ENCODE measurements at regions of chr13 and their contacts with region 1.

Region 1: GRCh38 chr13:108895220-108895704 is 265.9 kb downstream of the MYO16 start:
- DNase-seq: no peak
- ATAC-seq: peak; percentile 52; the same call in 1 of the 2 replicates
- H3K4me3 ChIP-seq: no peak overlapping the region
- H3K27ac ChIP-seq: no peak overlapping the region
- H3K4me1 ChIP-seq: no peaks in the 10 kb centered on the region
- H3K27me3 ChIP-seq: no peaks in the 10 kb centered on the region
- CTCF ChIP-seq: peak; percentile 24 to 64 (median 47); a peak in 4 of 6 replicates
- POLR2A ChIP-seq: no peak
- RAD21 ChIP-seq: peak; percentile 68

Region 2: GRCh38 chr13:108227651-108228272 is 667.5 kb before region 1 on chr13:
- CTCF ChIA-PET with region 1: no interaction called
- POLR2A ChIA-PET with region 1: no interaction called
- RAD21 ChIA-PET with region 1: no interaction called
- intact Hi-C with region 1: loop called (anchors 2 kb)
- DNase-seq: peak; percentile 19
- ATAC-seq: 0 out of 2 replicates have a peak, but pooled peaks have one; percentile 32
- H3K4me3 ChIP-seq: no peak overlapping the region
- H3K27ac ChIP-seq: no peak overlapping the region
- H3K4me1 ChIP-seq: no peaks in the 10 kb centered on the region
- H3K27me3 ChIP-seq: no peaks in the 10 kb centered on the region
- CTCF ChIP-seq: peak in 2 of 3 experiments; percentile 59 to 81; a peak in 4 of 6 replicates
- POLR2A ChIP-seq: no peak
- RAD21 ChIP-seq: peak; percentile 46

Region 3: DNA sequence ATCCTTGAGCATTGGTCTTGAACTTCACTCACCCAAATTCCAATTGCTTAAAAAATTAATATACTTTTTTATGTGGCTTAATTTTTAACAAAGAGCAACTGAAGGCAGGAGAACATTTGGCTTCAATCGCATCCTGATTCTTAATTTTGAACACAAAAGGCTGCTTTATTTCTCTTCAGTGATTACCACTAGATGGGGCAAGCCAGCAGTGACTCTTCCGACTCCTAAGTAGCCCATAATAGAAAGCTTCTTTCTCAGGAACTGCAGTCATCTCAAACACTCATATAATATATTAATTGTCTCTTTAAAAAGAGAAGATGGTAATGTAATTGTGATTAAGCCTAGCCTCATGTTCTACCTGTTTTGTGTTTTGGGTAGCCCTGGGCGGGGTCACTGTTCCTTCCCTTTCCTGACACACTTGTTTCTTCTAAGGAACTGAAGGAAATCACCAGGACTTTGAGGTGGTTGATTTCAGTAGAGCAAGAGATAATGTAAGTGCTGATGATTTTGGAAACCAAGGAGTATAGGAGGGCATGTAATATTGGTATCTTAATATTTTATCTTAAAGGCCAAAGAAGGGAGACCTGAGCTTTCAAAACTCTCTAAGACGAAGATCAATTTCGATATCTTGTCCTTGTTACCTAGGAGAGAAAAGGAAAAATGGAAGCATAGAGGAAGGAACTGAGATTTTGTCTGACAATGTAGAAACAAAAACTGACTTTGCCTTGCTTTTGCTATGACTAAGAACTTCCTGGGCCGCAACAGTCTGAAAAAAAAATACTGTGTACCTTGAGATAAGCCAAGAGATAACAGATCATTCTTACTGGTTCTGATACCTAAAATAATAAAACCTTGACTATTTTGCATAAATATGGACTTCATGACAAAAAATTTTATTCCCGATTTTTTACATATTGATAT is 552.6 kb before region 1 on chr13:
- CTCF ChIA-PET with region 1: interaction called, 15 read pairs
- POLR2A ChIA-PET with region 1: no interaction called
- RAD21 ChIA-PET with region 1: no interaction called
- intact Hi-C with region 1: loop called (anchors 1 kb)
- DNase-seq: peak; percentile 16
- ATAC-seq: peak; percentile 74
- H3K4me3 ChIP-seq: no peak overlapping the region
- H3K27ac ChIP-seq: no peak overlapping the region
- H3K4me1 ChIP-seq: no peaks in the 10 kb centered on the region
- H3K27me3 ChIP-seq: peaks cover 44% of the 10 kb centered on the region
- CTCF ChIP-seq: peak; percentile 53 to 72 (median 63); a peak in 5 of 6 replicates
- POLR2A ChIP-seq: no peak
- RAD21 ChIP-seq: peak; percentile 53

Region 4: GRCh38 chr13:108609353-108609752 is 285.9 kb before region 1 on chr13:
- CTCF ChIA-PET with region 1: interaction called, 19 read pairs
- POLR2A ChIA-PET with region 1: no interaction called
- RAD21 ChIA-PET with region 1: interaction called in 1 of 2 experiments, 6 read pairs
- intact Hi-C with region 1: loop called (anchors 1 kb)
- DNase-seq: peak; percentile 37
- ATAC-seq: peak; percentile 70
- H3K4me3 ChIP-seq: no peak overlapping the region
- H3K27ac ChIP-seq: no peak overlapping the region
- H3K4me1 ChIP-seq: no peaks in the 10 kb centered on the region
- H3K27me3 ChIP-seq: no peaks in the 10 kb centered on the region
- CTCF ChIP-seq: peak; percentile 36 to 50 (median 48); a peak in 5 of 6 replicates
- POLR2A ChIP-seq: no peak
- RAD21 ChIP-seq: peak; percentile 52

Measured in HCT116 (cell line).